AG04449 (cell line): ENCODE measurements at regions of chr11 and their contacts with region 1.

Region 1: GRCh38 chr11:9875399-9875798 is 211.5 kb downstream of the SWAP70 start:
- DNase-seq: no peak
- H3K4me3 ChIP-seq: no peak overlapping the region
- CTCF ChIP-seq: no peak

Region 2: GRCh38 chr11:9688716-9689511 is 186.5 kb before region 1 on chr11:
- CTCF ChIA-PET with region 1: no interaction called
- POLR2A ChIA-PET with region 1: no interaction called
- DNase-seq: no peak
- H3K4me3 ChIP-seq: no peak overlapping the region
- CTCF ChIP-seq: no peak

Region 3: GRCh38 chr11:9861860-9862725 is 13.3 kb before region 1 on chr11:
- CTCF ChIA-PET with region 1: interaction called, 17 read pairs
- POLR2A ChIA-PET with region 1: no interaction called
- DNase-seq: peak; percentile 33
- H3K4me3 ChIP-seq: no peak overlapping the region
- CTCF ChIP-seq: peak; percentile 67

Region 4: GRCh38 chr11:9951714-9952275 is 76.4 kb after region 1 on chr11:
- CTCF ChIA-PET with region 1: no interaction called
- POLR2A ChIA-PET with region 1: no interaction called
- DNase-seq: no peak
- H3K4me3 ChIP-seq: no peak overlapping the region
- CTCF ChIP-seq: no peak